ENCODE measurements at regions of chr14 and their contacts with region 1.

Region 1: DNA sequence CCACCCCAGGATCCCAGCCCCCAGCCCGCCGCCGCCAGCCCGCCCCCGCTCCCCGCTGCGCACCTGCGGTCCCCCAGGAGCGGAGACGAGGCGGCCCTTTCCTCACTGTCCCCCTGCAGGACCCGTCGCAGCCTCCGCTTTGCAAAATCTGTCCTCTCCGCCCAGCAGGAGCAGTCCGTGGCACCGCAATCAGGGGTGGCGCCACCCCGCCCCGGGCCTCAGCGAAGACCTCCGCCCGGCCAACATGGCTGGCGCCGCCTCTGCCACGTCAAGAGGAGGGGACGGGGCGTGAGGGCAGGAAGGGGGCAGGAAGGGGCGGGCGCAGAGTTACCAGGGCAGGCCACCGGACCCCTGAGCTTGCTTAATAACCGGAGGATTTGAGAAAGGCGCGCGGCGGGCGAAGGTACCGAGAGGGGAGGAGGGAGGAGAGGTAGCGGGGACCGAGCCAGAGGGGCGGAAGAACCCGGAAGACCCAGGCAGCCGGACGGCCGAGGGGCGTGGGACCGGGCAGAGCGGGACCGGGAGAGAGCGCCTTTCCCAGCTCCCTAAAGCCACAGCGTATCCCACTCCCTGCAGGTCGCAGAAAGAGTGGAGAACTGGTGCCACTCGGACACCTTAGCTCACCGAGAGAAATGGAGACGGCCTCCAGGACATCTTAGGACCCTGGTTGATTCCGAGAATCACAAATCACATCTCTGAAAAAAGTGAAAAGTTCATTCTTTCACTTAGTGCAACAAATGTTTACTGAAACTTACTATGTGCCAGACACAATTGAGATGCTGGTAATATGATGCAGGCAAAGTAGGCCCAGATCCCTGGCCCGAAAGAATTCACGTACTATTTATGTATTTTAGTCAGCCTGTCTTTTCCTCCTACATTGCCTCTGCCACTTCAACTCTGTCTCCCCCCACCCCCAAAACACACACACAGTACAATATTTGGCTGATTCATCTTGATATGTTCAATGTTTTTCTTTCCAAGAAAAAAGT is at the start of gene SEC23A:
- DNase-seq: peak; percentile 63 to 90 (median 78)
- H3K4me3 ChIP-seq: peak within 1 kb of the TSS; percentile 62 to 98 (median 91)
- H3K27ac ChIP-seq: peak within 1 kb of the TSS; percentile 49 to 99 (median 96)
- H3K27me3 ChIP-seq: no peaks in the 10 kb centered on the region
- CTCF ChIP-seq: peak in 24 of 56 donors; percentile 3 to 39 (median 21)
- total RNA-seq, gene SEC23A: 47.9 to 106 (median 76.3) TPM

Region 2: GRCh38 chr14:38982837-38983236 is 120.4 kb before region 1 on chr14:
- intact Hi-C with region 1: no loop called
- DNase-seq: no peak
- H3K4me3 ChIP-seq: no peak overlapping the region
- H3K27ac ChIP-seq: no peak overlapping the region
- H3K27me3 ChIP-seq: peaks cover 0 to 5% (median 0%) of the 10 kb centered on the region in 45 donors
- CTCF ChIP-seq: no peak

Region 3: GRCh38 chr14:39368261-39368959 is 265.1 kb after region 1 on chr14:
- intact Hi-C with region 1: loop called (anchors 5 to 10 kb)
- DNase-seq: peak in 6 of 10 donors; percentile 26 to 77 (median 54)
- H3K4me3 ChIP-seq: no peak overlapping the region
- H3K27ac ChIP-seq: peak overlapping the region in 4 of 59 donors; percentile 8 to 62 (median 16)
- H3K27me3 ChIP-seq: no peaks in the 10 kb centered on the region
- CTCF ChIP-seq: peak in 54 of 56 donors; percentile 19 to 76 (median 58)

Region 4: GRCh38 chr14:39374851-39375250 is 271.6 kb after region 1 on chr14:
- intact Hi-C with region 1: loop called in 1 of 2 experiments (anchors 5 kb)
- DNase-seq: no peak
- H3K4me3 ChIP-seq: no peak overlapping the region
- H3K27ac ChIP-seq: no peak overlapping the region
- H3K27me3 ChIP-seq: no peaks in the 10 kb centered on the region
- CTCF ChIP-seq: no peak

Region 5: GRCh38 chr14:39432179-39432618 is 328.9 kb after region 1 on chr14 and contains the start of gene FBXO33:
- intact Hi-C with region 1: loop called in 1 of 2 experiments (anchors 5 kb)
- DNase-seq: peak; percentile 94 to 98 (median 96)
- H3K4me3 ChIP-seq: peak within 1 kb of the TSS; percentile 73 to 100 (median 93)
- H3K27ac ChIP-seq: peak within 1 kb of the TSS; percentile 83 to 99 (median 98)
- H3K27me3 ChIP-seq: no peaks in the 10 kb centered on the region
- CTCF ChIP-seq: peak in 5 of 56 donors; percentile 1 to 10 (median 5)
- total RNA-seq, gene FBXO33: 13.8 to 42.2 (median 27.4) TPM

Measured in dorsolateral prefrontal cortex (tissue), 120 donors.